ENCODE measurements at regions of chr10 and their contacts with region 1.

Region 1: GRCh38 chr10:29304264-29305030 is 15.6 kb downstream of the LYZL1 start:
- DNase-seq: peak; percentile 62
- ATAC-seq: peak; percentile 95
- H3K4me3 ChIP-seq: no peak overlapping the region
- H3K27ac ChIP-seq: no peak overlapping the region
- H3K4me1 ChIP-seq: no peaks in the 10 kb centered on the region
- H3K27me3 ChIP-seq: no peaks in the 10 kb centered on the region
- CTCF ChIP-seq: peak; percentile 64 to 81 (median 79)
- POLR2A ChIP-seq: no peak
- RAD21 ChIP-seq: peak; percentile 89

Region 2: GRCh38 chr10:28432210-28432676 is 872.2 kb before region 1 on chr10:
- CTCF ChIA-PET with region 1: no interaction called
- POLR2A ChIA-PET with region 1: no interaction called
- RAD21 ChIA-PET with region 1: no interaction called
- intact Hi-C with region 1: loop called (anchors 5 kb)
- DNase-seq: peak; percentile 70
- ATAC-seq: peak; percentile 93
- H3K4me3 ChIP-seq: peak overlapping the region in 1 of 2 experiments; percentile 34; a peak in 2 of 4 replicates
- H3K27ac ChIP-seq: no peak overlapping the region
- H3K4me1 ChIP-seq: peaks cover 0 to 7% of the 10 kb centered on the region in 2 experiments; a peak in 2 of 4 replicates
- H3K27me3 ChIP-seq: no peaks in the 10 kb centered on the region
- CTCF ChIP-seq: peak; percentile 67 to 83 (median 81)
- POLR2A ChIP-seq: no peak
- RAD21 ChIP-seq: peak; percentile 80

Region 3: DNA sequence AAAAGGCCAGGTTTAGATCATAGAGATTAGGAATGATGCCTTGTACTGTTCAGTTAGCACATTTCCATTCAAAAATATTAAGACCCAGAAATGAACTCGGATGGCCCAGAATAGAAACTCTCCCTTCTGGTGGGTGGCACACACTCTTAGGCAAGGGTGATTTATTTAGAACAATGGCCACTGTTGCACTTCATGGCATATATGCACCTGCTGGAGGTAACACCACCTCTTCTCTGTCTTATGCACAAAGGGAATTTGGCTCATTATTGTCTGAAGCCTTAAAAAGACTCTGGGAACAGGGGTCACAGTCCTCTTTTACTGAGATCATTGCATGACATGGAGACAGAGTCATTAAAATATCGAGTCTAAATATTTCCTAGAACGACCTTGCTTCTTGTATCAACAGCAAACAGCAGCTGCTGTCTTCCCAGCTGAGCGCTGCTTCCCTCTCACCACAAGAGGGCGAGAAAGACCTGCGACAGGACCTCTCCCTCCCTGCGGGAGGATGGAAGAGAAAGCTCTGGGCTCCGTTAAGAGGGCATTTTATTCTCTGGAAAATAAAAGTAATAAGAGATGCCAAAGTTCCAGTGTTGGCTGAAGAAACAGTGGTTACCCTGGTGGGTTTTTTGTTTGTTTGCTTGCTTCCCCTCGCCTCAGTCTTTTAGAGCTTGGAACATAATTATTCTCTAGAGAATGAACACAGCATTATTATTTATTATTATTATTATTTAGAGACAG is 640.7 kb before region 1 on chr10:
- CTCF ChIA-PET with region 1: interaction called, 32 read pairs
- POLR2A ChIA-PET with region 1: no interaction called
- RAD21 ChIA-PET with region 1: interaction called in 1 of 2 experiments, 3 read pairs
- intact Hi-C with region 1: loop called (anchors 1 kb)
- DNase-seq: peak; percentile 66
- ATAC-seq: peak; percentile 98
- H3K4me3 ChIP-seq: no peak overlapping the region
- H3K27ac ChIP-seq: no peak overlapping the region
- H3K4me1 ChIP-seq: peaks cover 2 to 20% of the 10 kb centered on the region in 2 experiments; a peak in 3 of 4 replicates
- H3K27me3 ChIP-seq: no peaks in the 10 kb centered on the region
- CTCF ChIP-seq: peak; percentile 92 to 99 (median 97)
- POLR2A ChIP-seq: no peak
- RAD21 ChIP-seq: peak; percentile 97

Region 4: DNA sequence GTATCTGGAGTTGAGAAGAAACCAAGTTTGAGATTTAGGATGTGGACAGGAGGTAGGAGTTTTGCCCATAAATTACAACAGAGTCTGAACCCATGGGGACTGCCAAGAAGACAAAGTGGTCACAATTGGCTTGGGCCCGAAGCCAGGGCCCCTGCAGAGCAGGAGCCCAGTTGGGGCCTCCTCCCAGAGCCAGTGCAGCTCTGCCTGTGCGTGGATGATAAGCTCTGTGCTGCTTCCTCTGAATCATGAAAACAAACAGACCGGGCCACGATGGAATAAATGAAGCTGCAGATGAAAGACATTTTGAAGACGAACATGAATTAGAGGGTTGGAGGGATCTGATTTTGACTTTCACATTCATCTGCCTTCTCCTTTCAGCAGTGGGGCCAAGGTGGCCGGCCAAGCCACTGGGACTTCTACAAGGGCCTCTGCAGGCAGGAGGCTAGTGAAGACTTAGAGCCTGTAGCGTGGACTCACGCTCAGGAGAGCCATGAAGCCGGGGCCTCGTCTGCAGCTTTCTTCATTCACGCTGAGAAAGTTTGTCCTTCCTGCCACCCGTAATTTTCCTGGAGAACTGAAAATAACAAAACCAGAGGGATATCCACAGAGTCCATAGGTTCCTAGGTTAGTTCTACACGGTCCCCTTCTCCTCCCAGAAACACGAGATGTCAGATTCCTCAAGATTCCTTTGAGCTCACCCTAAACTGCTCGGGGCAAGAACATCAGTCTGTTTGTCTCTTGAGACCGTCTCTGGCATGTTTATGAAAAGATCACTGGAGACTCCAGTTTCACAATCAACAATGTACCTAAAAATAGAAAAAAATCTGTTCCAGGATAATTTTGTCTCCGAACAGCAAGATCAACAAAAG is 172.3 kb before region 1 on chr10:
- CTCF ChIA-PET with region 1: interaction called, 8 read pairs
- POLR2A ChIA-PET with region 1: no interaction called
- RAD21 ChIA-PET with region 1: no interaction called
- intact Hi-C with region 1: loop called (anchors 1 kb)
- DNase-seq: no peak
- ATAC-seq: no peak
- H3K4me3 ChIP-seq: no peak overlapping the region
- H3K27ac ChIP-seq: no peak overlapping the region
- H3K4me1 ChIP-seq: no peaks in the 10 kb centered on the region; a peak in 1 of 4 replicates
- H3K27me3 ChIP-seq: peaks cover 1% of the 10 kb centered on the region
- CTCF ChIP-seq: no peak
- POLR2A ChIP-seq: no peak
- RAD21 ChIP-seq: no peak

Region 5: DNA sequence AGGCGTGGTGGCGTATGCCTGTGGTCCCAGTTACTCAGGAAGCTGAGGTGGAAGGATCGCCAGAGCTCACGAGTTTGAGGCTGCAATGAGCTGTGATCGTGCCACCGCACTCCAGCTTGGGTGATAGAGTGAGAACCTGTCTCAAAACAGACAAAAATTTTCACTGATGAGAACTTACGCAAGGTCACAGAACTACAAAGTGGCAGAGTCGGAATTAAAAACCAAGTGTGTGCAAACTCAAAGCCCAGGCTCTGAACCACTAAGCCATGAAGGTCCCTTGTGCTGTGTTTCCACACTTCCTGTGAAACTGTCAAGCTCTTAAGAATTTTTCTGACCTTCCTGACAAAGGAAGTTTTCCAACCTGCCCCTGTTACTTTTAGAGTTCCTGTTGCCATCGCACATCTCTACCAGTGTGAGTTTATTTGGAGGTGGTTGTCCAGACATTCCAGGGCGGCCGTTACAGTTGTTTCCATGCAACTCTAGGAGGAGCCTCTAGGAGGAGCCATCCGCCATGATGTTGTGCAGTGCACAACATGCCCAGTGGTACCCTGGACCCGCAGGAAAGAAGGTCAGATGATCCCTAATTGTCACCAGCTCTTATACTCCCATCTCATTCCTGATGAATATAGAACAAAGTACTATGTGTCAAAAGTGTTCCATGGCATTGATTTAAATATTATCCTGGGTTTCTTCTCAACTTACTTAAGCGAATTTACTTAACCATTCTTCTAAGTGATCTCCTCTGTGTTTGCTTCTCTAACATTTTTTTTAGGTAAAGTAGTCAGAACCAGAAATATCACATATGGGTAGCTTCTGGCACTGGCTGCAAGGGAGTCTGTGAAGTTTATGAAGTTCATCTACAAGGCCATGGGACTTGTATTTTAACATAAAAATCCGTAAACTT is 64.6 kb before region 1 on chr10:
- CTCF ChIA-PET with region 1: interaction called, 5 read pairs
- POLR2A ChIA-PET with region 1: no interaction called
- RAD21 ChIA-PET with region 1: interaction called in 1 of 2 experiments, 6 read pairs
- intact Hi-C with region 1: loop called (anchors 2 kb)
- DNase-seq: peak; percentile 43
- ATAC-seq: peak; percentile 100
- H3K4me3 ChIP-seq: no peak overlapping the region
- H3K27ac ChIP-seq: no peak overlapping the region
- H3K4me1 ChIP-seq: no peaks in the 10 kb centered on the region
- H3K27me3 ChIP-seq: no peaks in the 10 kb centered on the region
- CTCF ChIP-seq: peak; percentile 62 to 91 (median 84); a peak in 5 of 6 replicates
- POLR2A ChIP-seq: no peak
- RAD21 ChIP-seq: peak; percentile 76